Colonic mucosa (tissue), 4 donors: ENCODE measurements at regions of chr11 and their contacts with region 1.

Region 1: GRCh38 chr11:35404388-35404775 is 15.0 kb downstream of the SLC1A2 start:
- DNase-seq: peak; percentile 53
- H3K4me3 ChIP-seq: no peak overlapping the region
- H3K27ac ChIP-seq: no peak overlapping the region
- H3K4me1 ChIP-seq: no peaks in the 10 kb centered on the region
- H3K27me3 ChIP-seq: no peaks in the 10 kb centered on the region
- CTCF ChIP-seq: peak; percentile 36

Region 2: GRCh38 chr11:34706709-34707461 is 697.5 kb before region 1 on chr11:
- intact Hi-C with region 1: no loop called
- DNase-seq: no peak
- H3K4me3 ChIP-seq: no peak overlapping the region
- H3K27ac ChIP-seq: no peak overlapping the region
- H3K4me1 ChIP-seq: no peaks in the 10 kb centered on the region
- H3K27me3 ChIP-seq: no peaks in the 10 kb centered on the region
- CTCF ChIP-seq: no peak

Region 3: DNA sequence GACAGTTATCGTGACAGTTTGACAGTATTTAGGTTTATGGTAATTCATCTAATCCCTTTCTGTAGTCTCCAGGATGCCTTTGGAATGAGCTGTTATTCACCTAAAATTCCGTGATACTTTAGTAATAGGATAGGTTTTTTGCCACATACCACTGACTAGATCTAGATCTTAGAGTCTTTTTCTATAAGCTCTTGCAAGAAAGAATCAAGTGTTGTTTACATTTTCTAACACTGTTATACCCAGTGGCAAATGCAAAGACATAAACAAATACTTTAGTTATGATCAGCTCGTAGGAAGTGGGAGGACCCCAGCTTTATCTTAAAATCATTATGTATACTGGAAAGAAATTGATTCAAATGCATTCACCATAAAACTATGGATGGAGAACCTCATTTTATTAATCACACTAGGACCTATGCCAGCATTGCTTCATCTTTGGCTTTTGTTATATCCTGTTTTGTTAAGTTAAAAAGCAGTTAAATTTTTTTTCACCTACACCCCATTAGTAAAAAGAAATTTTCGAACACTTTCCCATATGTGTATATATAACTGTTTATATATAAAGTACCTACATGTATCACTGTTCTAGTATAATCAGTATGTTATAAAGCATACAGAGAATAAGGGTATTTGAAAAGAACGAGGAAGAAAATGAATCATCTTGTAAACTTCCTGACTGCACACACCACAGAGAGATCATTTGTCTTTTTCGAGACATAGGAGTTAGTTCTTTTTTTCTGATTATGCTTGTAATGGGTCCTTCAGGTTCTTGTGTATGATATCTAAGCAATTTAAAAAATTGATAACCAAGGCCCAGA is 427.1 kb before region 1 on chr11:
- intact Hi-C with region 1: no loop called
- DNase-seq: no peak
- H3K4me3 ChIP-seq: no peak overlapping the region
- H3K27ac ChIP-seq: no peak overlapping the region
- H3K4me1 ChIP-seq: no peaks in the 10 kb centered on the region
- H3K27me3 ChIP-seq: no peaks in the 10 kb centered on the region
- CTCF ChIP-seq: no peak

Region 4: GRCh38 chr11:35485656-35486322 is 81.4 kb after region 1 on chr11:
- intact Hi-C with region 1: loop called (anchors 10 kb)
- DNase-seq: peak; percentile 78
- H3K4me3 ChIP-seq: no peak overlapping the region
- H3K27ac ChIP-seq: no peak overlapping the region
- H3K4me1 ChIP-seq: no peaks in the 10 kb centered on the region
- H3K27me3 ChIP-seq: no peaks in the 10 kb centered on the region
- CTCF ChIP-seq: peak; percentile 94